Heart right ventricle (tissue), 16 donors: ENCODE measurements at regions of chr15 and their contacts with region 1.

Region 1: GRCh38 chr15:52667597-52667996 is 11.6 kb downstream of the ATOSA start:
- DNase-seq: no peak
- ATAC-seq: peak in 2 of 8 donors; percentile 8 to 40
- H3K4me3 ChIP-seq: no peak overlapping the region
- H3K27ac ChIP-seq: peak overlapping the region in 1 of 10 donors; percentile 32
- H3K4me1 ChIP-seq: peaks cover 0 to 33% (median 25%) of the 10 kb centered on the region in 9 donors
- H3K27me3 ChIP-seq: no peaks in the 10 kb centered on the region
- CTCF ChIP-seq: no peak

Region 2: GRCh38 chr15:52584414-52584813 is 83.2 kb before region 1 on chr15:
- intact Hi-C with region 1: loop called in 1 of 10 experiments (anchors 10 kb)
- DNase-seq: no peak
- ATAC-seq: no peak
- H3K4me3 ChIP-seq: no peak overlapping the region
- H3K27ac ChIP-seq: no peak overlapping the region
- H3K4me1 ChIP-seq: peaks cover 0 to 9% (median 0%) of the 10 kb centered on the region in 9 donors
- H3K27me3 ChIP-seq: no peaks in the 10 kb centered on the region
- CTCF ChIP-seq: no peak

Region 3: DNA sequence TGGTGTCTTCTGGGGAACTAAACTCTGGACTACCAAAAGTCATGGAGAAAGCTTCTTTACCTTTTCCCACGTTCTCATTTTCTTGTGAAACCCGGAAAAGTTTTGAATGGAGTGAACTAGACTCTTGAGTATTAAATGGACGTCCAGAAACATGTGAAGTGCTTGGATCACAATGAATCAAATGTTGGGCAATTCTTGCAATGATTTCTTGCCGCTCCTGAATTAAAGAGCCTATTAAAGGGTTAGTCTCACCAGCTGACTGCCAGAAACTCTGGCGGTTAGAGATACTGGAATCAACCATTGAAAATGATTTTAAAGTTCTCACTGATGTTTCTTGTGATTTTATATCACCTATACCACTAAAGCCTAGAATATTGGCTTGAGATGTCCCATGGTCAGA is 58.0 kb before region 1 on chr15:
- intact Hi-C with region 1: loop called in 1 of 10 experiments (anchors 10 kb)
- DNase-seq: no peak
- ATAC-seq: no peak
- H3K4me3 ChIP-seq: no peak overlapping the region
- H3K27ac ChIP-seq: no peak overlapping the region
- H3K4me1 ChIP-seq: no peaks in the 10 kb centered on the region
- H3K27me3 ChIP-seq: no peaks in the 10 kb centered on the region
- CTCF ChIP-seq: no peak